ENCODE measurements at regions of chr15 and their contacts with region 1.

Region 1: GRCh38 chr15:38690689-38691332 is 126.2 kb upstream of the RASGRP1 start:
- DNase-seq: peak; percentile 88
- H3K4me3 Mint-ChIP-seq: no peak overlapping the region
- H3K27ac Mint-ChIP-seq: peak overlapping the region; percentile 95
- H3K4me1 Mint-ChIP-seq: peaks cover 90% of the 10 kb centered on the region
- H3K27me3 Mint-ChIP-seq: no peaks in the 10 kb centered on the region

Region 2: GRCh38 chr15:38440353-38441129 is 250.3 kb before region 1 on chr15:
- CTCF ChIA-PET with region 1: interaction called, 56 read pairs
- POLR2A ChIA-PET with region 1: no interaction called
- DNase-seq: peak; percentile 66
- H3K4me3 Mint-ChIP-seq: no peak overlapping the region
- H3K27ac Mint-ChIP-seq: peak overlapping the region; percentile 60
- H3K4me1 Mint-ChIP-seq: peaks cover 7% of the 10 kb centered on the region
- H3K27me3 Mint-ChIP-seq: peaks cover 41% of the 10 kb centered on the region

Region 3: GRCh38 chr15:38474155-38474757 is 216.6 kb before region 1 on chr15:
- CTCF ChIA-PET with region 1: interaction called, 11 read pairs
- POLR2A ChIA-PET with region 1: interaction called, 5 read pairs
- DNase-seq: peak; percentile 57
- H3K4me3 Mint-ChIP-seq: no peak overlapping the region
- H3K27ac Mint-ChIP-seq: peak overlapping the region; percentile 74
- H3K4me1 Mint-ChIP-seq: peaks cover 13% of the 10 kb centered on the region
- H3K27me3 Mint-ChIP-seq: no peaks in the 10 kb centered on the region

Region 4: GRCh38 chr15:38504680-38505467 is 185.9 kb before region 1 on chr15:
- CTCF ChIA-PET with region 1: interaction called, 16 read pairs
- POLR2A ChIA-PET with region 1: no interaction called
- DNase-seq: no peak
- H3K4me3 Mint-ChIP-seq: no peak overlapping the region
- H3K27ac Mint-ChIP-seq: peak overlapping the region; percentile 31
- H3K4me1 Mint-ChIP-seq: peaks cover 30% of the 10 kb centered on the region
- H3K27me3 Mint-ChIP-seq: no peaks in the 10 kb centered on the region

Region 5: GRCh38 chr15:38554354-38554753 is 136.5 kb before region 1 on chr15:
- CTCF ChIA-PET with region 1: interaction called, 194 read pairs
- POLR2A ChIA-PET with region 1: interaction called, 7 read pairs
- DNase-seq: peak; percentile 13
- H3K4me3 Mint-ChIP-seq: peak overlapping the region; percentile 0
- H3K27ac Mint-ChIP-seq: peak overlapping the region; percentile 38
- H3K4me1 Mint-ChIP-seq: peaks cover 88% of the 10 kb centered on the region
- H3K27me3 Mint-ChIP-seq: no peaks in the 10 kb centered on the region

Region 6: GRCh38 chr15:38651328-38652038 is 39.3 kb before region 1 on chr15:
- CTCF ChIA-PET with region 1: interaction called, 32 read pairs
- POLR2A ChIA-PET with region 1: interaction called, 6 read pairs
- DNase-seq: peak; percentile 81
- H3K4me3 Mint-ChIP-seq: peak overlapping the region; percentile 77
- H3K27ac Mint-ChIP-seq: peak overlapping the region; percentile 97
- H3K4me1 Mint-ChIP-seq: peaks cover 89% of the 10 kb centered on the region
- H3K27me3 Mint-ChIP-seq: no peaks in the 10 kb centered on the region

Region 7: GRCh38 chr15:38660738-38661137 is 30.1 kb before region 1 on chr15:
- CTCF ChIA-PET with region 1: interaction called, 32 read pairs
- POLR2A ChIA-PET with region 1: no interaction called
- DNase-seq: peak; percentile 28
- H3K4me3 Mint-ChIP-seq: peak overlapping the region; percentile 42
- H3K27ac Mint-ChIP-seq: peak overlapping the region; percentile 85
- H3K4me1 Mint-ChIP-seq: peaks cover 80% of the 10 kb centered on the region
- H3K27me3 Mint-ChIP-seq: no peaks in the 10 kb centered on the region

Region 8: GRCh38 chr15:38761681-38762080 is 70.9 kb after region 1 on chr15:
- CTCF ChIA-PET with region 1: no interaction called
- POLR2A ChIA-PET with region 1: no interaction called
- DNase-seq: no peak
- H3K4me3 Mint-ChIP-seq: no peak overlapping the region
- H3K27ac Mint-ChIP-seq: no peak overlapping the region
- H3K4me1 Mint-ChIP-seq: no peaks in the 10 kb centered on the region
- H3K27me3 Mint-ChIP-seq: peaks cover 23% of the 10 kb centered on the region